MCF 10A (cell line): ENCODE measurements at regions of chr17 and their contacts with region 1.

Region 1: DNA sequence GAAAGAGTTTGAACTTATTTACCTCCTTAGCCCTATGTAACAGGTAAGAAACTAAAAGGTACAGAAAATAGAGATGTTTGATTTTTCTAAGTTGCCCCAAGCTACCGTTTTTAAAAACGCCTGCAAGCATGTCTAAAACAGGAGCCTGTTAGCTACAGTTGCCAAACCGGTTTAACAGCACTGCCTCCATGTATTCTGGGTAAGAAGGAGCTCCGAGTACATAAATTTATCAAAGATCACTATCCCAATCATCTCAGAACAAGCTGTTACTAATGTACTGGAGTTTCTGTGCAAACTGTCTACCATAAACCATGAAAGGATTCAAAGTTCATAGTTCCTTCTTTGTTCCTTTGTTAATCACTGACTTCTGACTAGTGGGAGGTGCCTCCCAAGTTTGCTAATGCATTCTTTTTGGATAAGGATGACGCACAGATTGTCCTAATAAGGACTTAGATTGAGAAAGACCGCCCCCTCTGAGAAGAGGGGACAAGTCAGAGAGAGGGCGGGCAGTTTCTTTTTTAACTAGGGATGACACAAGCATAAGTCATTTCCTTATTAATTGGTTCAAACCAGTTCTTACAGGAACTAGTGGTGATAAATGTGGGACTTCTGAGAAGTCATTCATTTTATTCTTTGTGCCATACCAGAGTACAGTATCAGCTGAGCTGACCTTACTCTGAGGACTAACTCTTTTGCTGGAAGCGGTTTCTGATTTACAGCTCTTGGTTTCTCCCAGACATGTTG is 55.3 kb downstream of the TUBD1 start:
- DNase-seq: peak; percentile 99
- H3K4me3 Mint-ChIP-seq: peak overlapping the region; percentile 83
- H3K27ac Mint-ChIP-seq: peak overlapping the region; percentile 98
- H3K4me1 Mint-ChIP-seq: peaks cover 21% of the 10 kb centered on the region
- H3K27me3 Mint-ChIP-seq: no peaks in the 10 kb centered on the region
- CTCF ChIP-seq: no peak

Region 2: DNA sequence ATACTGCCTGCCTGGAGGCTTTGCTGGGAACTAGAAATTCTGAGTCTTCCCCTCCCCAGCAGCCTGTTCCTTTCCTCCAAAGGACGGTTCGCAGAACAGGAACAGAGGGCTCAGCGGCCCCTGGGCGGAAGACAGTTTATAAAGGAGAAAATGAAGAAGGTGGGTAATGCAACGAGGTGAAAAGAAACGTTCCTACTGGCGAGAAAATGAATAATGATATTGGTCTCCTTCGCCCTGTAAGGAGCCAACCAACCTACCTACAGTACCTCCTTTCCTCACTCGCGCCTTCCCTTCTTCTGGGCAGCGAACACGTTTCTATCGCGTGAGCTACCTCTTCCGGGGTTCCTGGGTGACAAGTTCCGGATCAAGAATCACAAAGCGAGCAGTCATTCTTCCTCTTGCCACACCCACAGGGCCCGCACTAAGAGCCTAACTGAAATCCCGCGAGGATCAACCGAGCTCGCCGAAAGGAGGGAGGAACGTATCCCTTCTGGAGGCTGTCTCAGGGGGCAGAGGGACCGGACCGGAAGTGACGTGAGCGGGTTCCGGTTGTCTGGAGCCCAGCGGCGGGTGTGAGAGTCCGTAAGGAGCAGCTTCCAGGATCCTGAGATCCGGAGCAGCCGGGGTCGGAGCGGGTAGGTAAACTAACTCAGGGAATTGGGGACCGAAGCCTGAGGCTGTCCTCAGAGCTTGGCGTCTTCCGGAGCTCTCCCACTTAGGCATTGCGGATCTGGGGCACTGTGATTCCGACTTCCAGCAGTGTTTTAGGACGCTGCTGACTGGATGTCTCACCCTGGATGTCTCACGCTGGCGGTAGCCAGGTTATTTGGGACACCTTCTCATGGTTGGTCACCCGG is 130.1 kb before region 1 on chr17 and contains the starts of genes PTRH2 and VMP1:
- CTCF ChIA-PET with region 1: interaction called, 3 read pairs
- POLR2A ChIA-PET with region 1: interaction called, 26 read pairs
- intact Hi-C with region 1: no loop called
- DNase-seq: peak; percentile 99
- H3K4me3 Mint-ChIP-seq: peak within 1 kb of the TSS; percentile 94
- H3K27ac Mint-ChIP-seq: peak within 1 kb of the TSS; percentile 99
- H3K4me1 Mint-ChIP-seq: peaks cover 21% of the 10 kb centered on the region
- H3K27me3 Mint-ChIP-seq: no peaks in the 10 kb centered on the region
- CTCF ChIP-seq: no peak
- total RNA-seq, gene PTRH2: 47.5 and 51.7 TPM in 2 replicates
- total RNA-seq, gene VMP1: 205 and 228 TPM in 2 replicates

Region 3: GRCh38 chr17:59753522-59754467 is 83.7 kb before region 1 on chr17:
- CTCF ChIA-PET with region 1: interaction called, 81 read pairs
- POLR2A ChIA-PET with region 1: interaction called, 135 read pairs
- intact Hi-C with region 1: loop called (anchors 1 kb)
- DNase-seq: peak; percentile 86
- H3K4me3 Mint-ChIP-seq: peak overlapping the region; percentile 56
- H3K27ac Mint-ChIP-seq: peak overlapping the region; percentile 83
- H3K4me1 Mint-ChIP-seq: peaks cover 23% of the 10 kb centered on the region
- H3K27me3 Mint-ChIP-seq: no peaks in the 10 kb centered on the region
- CTCF ChIP-seq: peak; percentile 62

Region 4: DNA sequence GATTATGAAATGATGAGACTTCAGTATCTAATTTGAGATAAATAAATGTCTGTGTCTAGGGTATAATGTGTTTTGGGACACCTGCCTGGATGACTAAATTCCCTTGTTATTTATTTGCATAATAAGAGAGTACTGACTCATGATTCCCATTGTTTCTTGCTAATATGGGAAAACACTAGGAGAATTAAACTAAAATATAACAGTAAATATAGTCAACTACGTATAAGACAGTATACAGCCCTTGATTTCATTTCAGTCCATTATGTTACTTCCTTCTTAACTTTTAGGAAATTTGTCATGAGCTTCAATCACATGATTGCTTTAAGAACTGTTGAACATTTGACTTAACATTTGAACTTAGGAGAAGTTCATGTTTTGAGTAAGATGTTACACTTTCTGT is 67.6 kb before region 1 on chr17:
- CTCF ChIA-PET with region 1: interaction called, 6 read pairs
- POLR2A ChIA-PET with region 1: interaction called, 135 read pairs
- intact Hi-C with region 1: no loop called
- DNase-seq: peak; percentile 61
- H3K4me3 Mint-ChIP-seq: no peak overlapping the region
- H3K27ac Mint-ChIP-seq: peak overlapping the region; percentile 75
- H3K4me1 Mint-ChIP-seq: no peaks in the 10 kb centered on the region
- H3K27me3 Mint-ChIP-seq: no peaks in the 10 kb centered on the region
- CTCF ChIP-seq: no peak

Region 5: GRCh38 chr17:59815965-59816364 is 21.5 kb before region 1 on chr17:
- CTCF ChIA-PET with region 1: no interaction called
- POLR2A ChIA-PET with region 1: interaction called, 22 read pairs
- intact Hi-C with region 1: no loop called
- DNase-seq: peak; percentile 14
- H3K4me3 Mint-ChIP-seq: no peak overlapping the region
- H3K27ac Mint-ChIP-seq: peak overlapping the region; percentile 57
- H3K4me1 Mint-ChIP-seq: peaks cover 30% of the 10 kb centered on the region
- H3K27me3 Mint-ChIP-seq: no peaks in the 10 kb centered on the region
- CTCF ChIP-seq: no peak

Region 6: GRCh38 chr17:59892924-59893676 is 55.6 kb after region 1 on chr17 and contains the starts of genes RPS6KB1 and TUBD1:
- CTCF ChIA-PET with region 1: interaction called, 5 read pairs
- POLR2A ChIA-PET with region 1: interaction called, 24 read pairs
- intact Hi-C with region 1: no loop called
- DNase-seq: peak; percentile 98
- H3K4me3 Mint-ChIP-seq: peak within 1 kb of the TSS; percentile 94
- H3K27ac Mint-ChIP-seq: peak within 1 kb of the TSS; percentile 99
- H3K4me1 Mint-ChIP-seq: peaks cover 9% of the 10 kb centered on the region
- H3K27me3 Mint-ChIP-seq: no peaks in the 10 kb centered on the region
- CTCF ChIP-seq: no peak
- total RNA-seq, gene RPS6KB1: 37.4 and 48.4 TPM in 2 replicates
- total RNA-seq, gene TUBD1: 4.4 and 5.2 TPM in 2 replicates